ENCODE measurements at regions of chr12 and their contacts with region 1.

Region 1: GRCh38 chr12:6195665-6196535 is 4.3 kb upstream of the CD9 start:
- H3K4me3 ChIP-seq: no peak overlapping the region
- H3K27ac ChIP-seq: no peak overlapping the region
- H3K4me1 ChIP-seq: no peaks in the 10 kb centered on the region
- CTCF ChIP-seq: peak; percentile 81

Region 2: DNA sequence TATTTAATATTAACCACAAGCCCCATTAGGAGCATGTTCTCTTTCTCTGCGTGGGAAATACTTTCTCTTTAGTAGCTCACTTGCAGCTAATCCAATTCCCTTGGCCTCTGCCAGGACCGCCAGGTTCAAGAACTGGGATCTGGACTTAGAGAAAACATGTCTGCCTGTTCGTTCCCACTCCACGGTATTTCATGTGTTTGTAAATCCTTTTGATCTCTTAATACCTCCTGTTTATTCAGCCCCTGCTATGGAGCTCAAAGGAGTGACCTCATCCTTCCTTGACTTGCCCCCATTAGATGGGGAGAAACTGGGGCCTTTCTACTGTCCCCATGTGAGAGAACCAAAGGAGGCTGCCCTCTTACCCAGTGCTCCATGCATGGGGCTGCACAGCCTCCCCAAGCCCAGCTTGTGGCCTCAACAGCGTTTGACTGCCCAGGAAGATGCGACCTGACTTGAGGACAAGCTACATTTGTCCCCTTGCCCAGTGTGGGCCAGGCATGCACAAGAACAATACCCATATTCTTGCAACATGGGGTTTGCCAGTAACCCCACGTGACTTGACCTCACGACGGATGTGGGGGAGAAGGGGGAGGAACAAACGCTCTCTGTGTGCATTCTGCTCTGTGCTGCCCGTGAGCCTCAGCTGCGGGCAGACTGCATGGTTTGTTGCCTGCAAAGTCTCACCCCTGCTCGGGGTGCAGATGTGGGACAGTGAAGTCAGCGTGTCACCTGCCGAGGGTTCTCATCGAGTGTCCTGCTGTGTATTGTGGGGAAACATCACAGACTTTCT is 34.6 kb after region 1 on chr12:
- CTCF ChIA-PET with region 1: interaction called, 15 read pairs
- POLR2A ChIA-PET with region 1: no interaction called
- H3K4me3 ChIP-seq: no peak overlapping the region
- H3K27ac ChIP-seq: no peak overlapping the region
- H3K4me1 ChIP-seq: peaks cover 20% of the 10 kb centered on the region
- CTCF ChIP-seq: no peak

Region 3: DNA sequence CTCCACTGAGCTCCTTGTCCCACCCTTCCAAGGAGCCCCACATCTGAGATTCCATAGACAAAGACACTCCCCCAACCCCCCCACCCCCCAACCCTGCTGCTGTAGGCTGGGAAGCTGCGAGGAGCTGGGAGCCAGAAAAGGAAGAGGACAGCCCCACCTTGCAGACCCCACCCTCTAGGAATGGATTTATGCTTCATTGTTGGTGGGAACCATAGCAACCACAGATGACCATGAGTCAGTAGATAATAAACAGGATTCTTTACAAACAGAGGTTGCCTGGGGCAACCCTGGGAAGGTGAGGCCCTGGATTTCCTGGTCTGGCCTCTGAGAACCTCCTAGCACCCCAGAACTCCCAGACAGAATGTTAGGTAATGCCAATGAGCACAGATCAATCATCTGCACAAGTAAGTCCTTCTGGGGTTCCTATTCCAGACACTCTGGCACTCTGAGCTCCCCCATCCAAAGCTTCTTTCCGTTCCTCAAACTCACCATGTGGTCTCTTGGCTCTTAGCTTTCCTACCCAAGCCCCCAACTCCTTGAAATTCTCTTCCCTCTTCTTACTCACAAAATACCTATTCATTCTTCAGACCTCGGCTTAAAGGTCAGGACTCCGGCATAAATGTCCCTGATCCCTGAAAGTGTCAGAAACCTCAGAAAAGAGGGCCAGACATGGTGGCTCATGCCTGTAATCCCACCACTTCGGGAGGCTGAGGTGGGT is 99.4 kb after region 1 on chr12:
- CTCF ChIA-PET with region 1: interaction called, 3 read pairs
- POLR2A ChIA-PET with region 1: interaction called, 10 read pairs
- H3K4me3 ChIP-seq: no peak overlapping the region
- H3K27ac ChIP-seq: no peak overlapping the region
- H3K4me1 ChIP-seq: 0 out of 2 replicates have a peak, but pooled peaks cover 3% of the 10 kb centered on the region
- CTCF ChIP-seq: no peak